Calu3 (cell line): ENCODE measurements at regions of chr13 and their contacts with region 1.

Region 1: GRCh38 chr13:36282818-36283445 is 14.7 kb downstream of the CCDC169 start:
- DNase-seq: no peak
- H3K4me3 Mint-ChIP-seq: no peak overlapping the region
- H3K27ac Mint-ChIP-seq: no peak overlapping the region
- H3K4me1 Mint-ChIP-seq: no peaks in the 10 kb centered on the region
- H3K27me3 Mint-ChIP-seq: peaks cover 23% of the 10 kb centered on the region
- CTCF ChIP-seq: peak; percentile 42

Region 2: GRCh38 chr13:36395280-36395679 is 112.3 kb after region 1 on chr13:
- CTCF ChIA-PET with region 1: interaction called, 5 read pairs
- intact Hi-C with region 1: loop called (anchors 5 kb)
- DNase-seq: no peak
- H3K4me3 Mint-ChIP-seq: no peak overlapping the region
- H3K27ac Mint-ChIP-seq: no peak overlapping the region
- H3K4me1 Mint-ChIP-seq: no peaks in the 10 kb centered on the region
- H3K27me3 Mint-ChIP-seq: no peaks in the 10 kb centered on the region
- CTCF ChIP-seq: no peak

Region 3: DNA sequence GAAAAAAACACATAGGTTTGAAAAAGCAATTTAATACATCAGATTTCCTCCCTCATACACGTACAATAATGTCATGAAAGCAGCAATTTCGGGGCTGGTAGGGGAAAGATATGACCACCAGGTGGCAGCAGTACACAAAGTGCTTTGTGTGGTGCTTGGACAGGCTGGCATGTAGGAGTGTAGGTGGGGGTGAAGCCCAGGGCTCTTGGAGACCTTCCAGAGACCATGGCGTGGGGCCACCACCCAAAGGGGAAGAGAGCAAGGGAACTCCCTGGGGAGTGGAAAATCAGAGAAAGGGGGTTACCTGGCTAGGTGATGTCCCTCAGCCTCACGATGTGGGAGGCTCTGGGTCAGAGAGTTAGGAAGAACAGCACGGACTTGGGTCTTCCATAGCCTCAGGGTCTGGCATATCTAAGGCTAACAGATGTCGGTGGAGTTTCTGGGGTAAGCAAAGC is 137.5 kb after region 1 on chr13:
- CTCF ChIA-PET with region 1: no interaction called
- intact Hi-C with region 1: loop called (anchors 5 kb)
- DNase-seq: peak; percentile 75
- H3K4me3 Mint-ChIP-seq: no peak overlapping the region
- H3K27ac Mint-ChIP-seq: no peak overlapping the region
- H3K4me1 Mint-ChIP-seq: peaks cover 28% of the 10 kb centered on the region
- H3K27me3 Mint-ChIP-seq: no peaks in the 10 kb centered on the region
- CTCF ChIP-seq: peak; percentile 61

Region 4: DNA sequence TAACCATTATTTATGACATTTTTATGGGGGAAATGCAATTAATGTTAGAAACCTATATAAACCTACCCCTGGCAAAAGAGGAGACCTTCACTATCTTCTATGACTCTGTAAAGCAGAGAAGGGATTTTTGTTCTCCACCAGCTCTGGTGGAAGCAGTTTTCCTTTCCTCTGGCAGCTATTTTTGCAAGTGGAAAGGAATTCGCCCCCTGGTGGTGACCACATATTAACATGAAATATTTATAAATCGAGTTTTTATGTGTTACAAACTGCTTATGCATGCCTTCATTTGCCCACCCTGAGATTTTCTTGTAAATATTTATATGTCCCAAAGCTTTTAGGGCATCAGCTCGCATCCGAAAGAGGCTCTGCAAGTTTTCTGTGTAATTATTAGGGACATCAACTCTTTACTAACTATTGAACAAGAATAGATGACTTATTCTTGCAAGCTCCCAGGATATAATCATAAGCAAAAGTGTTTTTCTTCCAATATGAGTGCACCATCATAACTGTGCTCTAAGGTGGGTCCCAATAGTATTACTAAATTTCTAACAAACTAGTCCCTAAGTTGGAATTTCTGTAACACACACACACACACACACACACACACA is 453.3 kb after region 1 on chr13:
- CTCF ChIA-PET with region 1: no interaction called
- intact Hi-C with region 1: loop called (anchors 5 kb)
- DNase-seq: peak; percentile 47
- H3K4me3 Mint-ChIP-seq: no peak overlapping the region
- H3K27ac Mint-ChIP-seq: no peak overlapping the region
- H3K4me1 Mint-ChIP-seq: no peaks in the 10 kb centered on the region
- H3K27me3 Mint-ChIP-seq: no peaks in the 10 kb centered on the region
- CTCF ChIP-seq: peak; percentile 71

Region 5: GRCh38 chr13:36752673-36753072 is 469.7 kb after region 1 on chr13:
- CTCF ChIA-PET with region 1: no interaction called
- intact Hi-C with region 1: no loop called
- DNase-seq: no peak
- H3K4me3 Mint-ChIP-seq: no peak overlapping the region
- H3K27ac Mint-ChIP-seq: no peak overlapping the region
- H3K4me1 Mint-ChIP-seq: no peaks in the 10 kb centered on the region
- H3K27me3 Mint-ChIP-seq: no peaks in the 10 kb centered on the region
- CTCF ChIP-seq: no peak

Region 6: DNA sequence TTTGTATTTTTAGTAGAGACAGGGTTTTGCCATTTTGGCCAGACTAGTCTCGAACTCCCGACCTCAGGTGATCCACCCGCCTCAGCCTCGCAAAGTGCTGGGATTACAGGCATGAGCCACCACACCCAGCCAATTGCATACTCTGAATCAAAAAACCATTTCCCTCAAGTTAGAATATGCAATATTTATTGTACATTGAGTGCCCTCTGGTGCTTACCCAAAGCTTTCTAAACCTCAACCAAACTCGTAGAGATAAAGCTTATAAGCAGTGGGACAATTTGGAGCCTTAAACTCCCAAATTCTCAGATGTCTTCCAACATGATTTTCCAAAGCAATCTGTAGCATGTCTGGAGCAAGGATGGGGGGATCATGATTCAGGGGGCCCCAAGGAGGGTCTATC is 558.5 kb after region 1 on chr13:
- CTCF ChIA-PET with region 1: interaction called, 5 read pairs
- intact Hi-C with region 1: loop called (anchors 5 kb)
- DNase-seq: peak; percentile 1
- H3K4me3 Mint-ChIP-seq: no peak overlapping the region
- H3K27ac Mint-ChIP-seq: no peak overlapping the region
- H3K4me1 Mint-ChIP-seq: no peaks in the 10 kb centered on the region
- H3K27me3 Mint-ChIP-seq: no peaks in the 10 kb centered on the region
- CTCF ChIP-seq: no peak

Region 7: GRCh38 chr13:36981156-36981743 is 698.3 kb after region 1 on chr13:
- CTCF ChIA-PET with region 1: no interaction called
- intact Hi-C with region 1: loop called (anchors 5 kb)
- DNase-seq: no peak
- H3K4me3 Mint-ChIP-seq: no peak overlapping the region
- H3K27ac Mint-ChIP-seq: no peak overlapping the region
- H3K4me1 Mint-ChIP-seq: no peaks in the 10 kb centered on the region
- H3K27me3 Mint-ChIP-seq: no peaks in the 10 kb centered on the region
- CTCF ChIP-seq: peak; percentile 16

Region 8: GRCh38 chr13:37074703-37075102 is 791.8 kb after region 1 on chr13:
- CTCF ChIA-PET with region 1: no interaction called
- intact Hi-C with region 1: loop called (anchors 5 kb)
- DNase-seq: no peak
- H3K4me3 Mint-ChIP-seq: no peak overlapping the region
- H3K27ac Mint-ChIP-seq: no peak overlapping the region
- H3K4me1 Mint-ChIP-seq: no peaks in the 10 kb centered on the region
- H3K27me3 Mint-ChIP-seq: no peaks in the 10 kb centered on the region
- CTCF ChIP-seq: no peak